AG04449 (cell line): ENCODE measurements at regions of chr19 and their contacts with region 1.

Region 1: GRCh38 chr19:4375164-4376027 is 25.0 kb downstream of the SH3GL1 start:
- DNase-seq: no peak
- H3K4me3 ChIP-seq: no peak overlapping the region
- CTCF ChIP-seq: peak; percentile 73

Region 2: DNA sequence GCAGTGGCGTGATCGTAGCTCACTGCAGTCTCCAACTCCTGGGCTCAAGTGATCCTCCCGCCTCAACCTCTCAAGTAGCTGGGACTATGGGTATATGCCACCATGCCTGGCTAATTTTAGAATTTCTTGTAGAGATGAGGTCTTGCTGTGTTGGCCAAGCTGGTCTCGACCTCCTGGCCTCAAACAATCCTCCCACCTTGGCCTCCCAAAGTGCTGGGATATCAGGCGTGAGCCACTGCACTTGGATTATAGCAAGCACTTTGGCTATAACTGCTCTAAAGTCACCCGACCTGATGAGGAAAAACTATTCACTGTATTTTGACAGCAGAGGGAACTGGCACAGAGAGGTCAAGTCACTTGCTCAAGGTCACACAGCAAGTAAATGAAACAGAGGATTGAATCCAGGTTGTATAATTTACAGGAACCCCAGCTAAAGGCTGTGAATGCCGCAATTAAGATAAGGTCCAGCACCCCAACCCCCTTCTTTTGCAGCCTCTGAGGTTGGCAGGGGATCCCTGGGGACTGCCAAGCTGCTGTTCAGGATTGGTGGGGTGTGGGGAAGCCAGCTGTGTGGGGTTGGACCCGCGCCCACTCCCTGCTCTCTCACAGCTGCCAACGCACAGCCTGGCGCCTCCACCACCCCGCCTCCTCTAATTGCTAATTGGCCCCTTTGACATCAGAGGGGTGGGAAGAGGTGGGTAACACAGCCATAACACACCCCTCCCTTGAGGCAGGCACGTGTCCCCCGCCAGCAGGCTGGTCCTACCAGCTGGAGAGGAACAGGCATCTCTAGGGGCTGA is 79.2 kb before region 1 on chr19:
- CTCF ChIA-PET with region 1: no interaction called
- POLR2A ChIA-PET with region 1: no interaction called
- DNase-seq: no peak
- H3K4me3 ChIP-seq: no peak overlapping the region
- CTCF ChIP-seq: no peak

Region 3: GRCh38 chr19:4352701-4353121 is 22.7 kb before region 1 on chr19:
- CTCF ChIA-PET with region 1: interaction called, 32 read pairs
- POLR2A ChIA-PET with region 1: no interaction called
- DNase-seq: no peak
- H3K4me3 ChIP-seq: no peak overlapping the region
- CTCF ChIP-seq: peak; percentile 72

Region 4: GRCh38 chr19:4362861-4363510 is 12.4 kb before region 1 on chr19:
- CTCF ChIA-PET with region 1: interaction called, 10 read pairs
- POLR2A ChIA-PET with region 1: no interaction called
- DNase-seq: no peak
- H3K4me3 ChIP-seq: no peak overlapping the region
- CTCF ChIP-seq: peak; percentile 22

Region 5: GRCh38 chr19:4390567-4391305 is 15.3 kb after region 1 on chr19:
- CTCF ChIA-PET with region 1: interaction called, 82 read pairs
- POLR2A ChIA-PET with region 1: interaction called, 3 read pairs
- DNase-seq: no peak
- H3K4me3 ChIP-seq: peak overlapping the region; percentile 26
- CTCF ChIP-seq: no peak